ENCODE measurements at regions of chr2 and their contacts with region 1.

Region 1: GRCh38 chr2:177618255-177619253 is 226.0 kb downstream of the AGPS start:
- ATAC-seq: peak; percentile 90 to 97 (median 93)
- H3K4me3 ChIP-seq: peak overlapping the region; percentile 68 to 82 (median 80)
- H3K27ac ChIP-seq: peak overlapping the region; percentile 99 to 100
- H3K4me1 ChIP-seq: peaks cover 22 to 61% of the 10 kb centered on the region in 2 donors

Region 2: GRCh38 chr2:177489719-177490301 is 128.7 kb before region 1 on chr2:
- in situ Hi-C with region 1: loop called in 2 of 9 experiments (anchors 25 kb)
- ATAC-seq: peak in 3 of 8 experiments; percentile 34 to 62 (median 44)
- H3K4me3 ChIP-seq: no peak overlapping the region
- H3K27ac ChIP-seq: no peak overlapping the region
- H3K4me1 ChIP-seq: peaks cover 0 to 2% of the 10 kb centered on the region in 2 donors

Region 3: GRCh38 chr2:177724398-177725287 is 106.1 kb after region 1 on chr2:
- in situ Hi-C with region 1: loop called in 1 of 9 experiments (anchors 25 kb)
- ATAC-seq: peak; percentile 51 to 82 (median 64)
- H3K4me3 ChIP-seq: no peak overlapping the region
- H3K27ac ChIP-seq: peak overlapping the region in 1 of 2 donors; percentile 65
- H3K4me1 ChIP-seq: peaks cover 38 to 97% of the 10 kb centered on the region in 2 donors

Region 4: GRCh38 chr2:177783835-177784744 is 165.5 kb after region 1 on chr2:
- in situ Hi-C with region 1: no loop called
- ATAC-seq: peak in 5 of 8 experiments; percentile 9 to 92 (median 86)
- H3K4me3 ChIP-seq: no peak overlapping the region
- H3K27ac ChIP-seq: no peak overlapping the region
- H3K4me1 ChIP-seq: peaks cover 0 to 8% of the 10 kb centered on the region in 2 donors